ENCODE measurements at regions of chr3 and their contacts with region 1.

Region 1: GRCh38 chr3:88003115-88003755 is 55.6 kb downstream of the CGGBP1 start:
- DNase-seq: no peak
- ATAC-seq: no peak
- H3K4me3 Mint-ChIP-seq: no peak overlapping the region
- H3K27ac Mint-ChIP-seq: no peak overlapping the region
- H3K4me1 Mint-ChIP-seq: peaks cover 7% of the 10 kb centered on the region
- H3K27me3 Mint-ChIP-seq: no peaks in the 10 kb centered on the region

Region 2: GRCh38 chr3:87771341-87772192 is 231.7 kb before region 1 on chr3:
- CTCF ChIA-PET with region 1: interaction called, 7 read pairs
- POLR2A ChIA-PET with region 1: no interaction called
- intact Hi-C with region 1: loop called (anchors 1 kb)
- DNase-seq: peak; percentile 58
- ATAC-seq: peak; percentile 90
- H3K4me3 Mint-ChIP-seq: no peak overlapping the region
- H3K27ac Mint-ChIP-seq: no peak overlapping the region
- H3K4me1 Mint-ChIP-seq: no peaks in the 10 kb centered on the region
- H3K27me3 Mint-ChIP-seq: peaks cover 3% of the 10 kb centered on the region

Region 3: GRCh38 chr3:87900061-87900460 is 103.2 kb before region 1 on chr3:
- CTCF ChIA-PET with region 1: interaction called, 3 read pairs
- POLR2A ChIA-PET with region 1: no interaction called
- intact Hi-C with region 1: loop called in 1 of 2 experiments (anchors 2 kb)
- DNase-seq: no peak
- ATAC-seq: no peak
- H3K4me3 Mint-ChIP-seq: no peak overlapping the region
- H3K27ac Mint-ChIP-seq: no peak overlapping the region
- H3K4me1 Mint-ChIP-seq: no peaks in the 10 kb centered on the region
- H3K27me3 Mint-ChIP-seq: no peaks in the 10 kb centered on the region

Region 4: GRCh38 chr3:88180398-88180999 is 177.3 kb after region 1 on chr3:
- CTCF ChIA-PET with region 1: interaction called, 3 read pairs
- POLR2A ChIA-PET with region 1: no interaction called
- intact Hi-C with region 1: loop called in 1 of 2 experiments (anchors 2 kb)
- DNase-seq: peak; percentile 30
- ATAC-seq: peak; percentile 66
- H3K4me3 Mint-ChIP-seq: no peak overlapping the region
- H3K27ac Mint-ChIP-seq: no peak overlapping the region
- H3K4me1 Mint-ChIP-seq: no peaks in the 10 kb centered on the region
- H3K27me3 Mint-ChIP-seq: no peaks in the 10 kb centered on the region